Pancreas (tissue), 10 donors: ENCODE measurements at regions of chr22 and their contacts with region 1.

Region 1: DNA sequence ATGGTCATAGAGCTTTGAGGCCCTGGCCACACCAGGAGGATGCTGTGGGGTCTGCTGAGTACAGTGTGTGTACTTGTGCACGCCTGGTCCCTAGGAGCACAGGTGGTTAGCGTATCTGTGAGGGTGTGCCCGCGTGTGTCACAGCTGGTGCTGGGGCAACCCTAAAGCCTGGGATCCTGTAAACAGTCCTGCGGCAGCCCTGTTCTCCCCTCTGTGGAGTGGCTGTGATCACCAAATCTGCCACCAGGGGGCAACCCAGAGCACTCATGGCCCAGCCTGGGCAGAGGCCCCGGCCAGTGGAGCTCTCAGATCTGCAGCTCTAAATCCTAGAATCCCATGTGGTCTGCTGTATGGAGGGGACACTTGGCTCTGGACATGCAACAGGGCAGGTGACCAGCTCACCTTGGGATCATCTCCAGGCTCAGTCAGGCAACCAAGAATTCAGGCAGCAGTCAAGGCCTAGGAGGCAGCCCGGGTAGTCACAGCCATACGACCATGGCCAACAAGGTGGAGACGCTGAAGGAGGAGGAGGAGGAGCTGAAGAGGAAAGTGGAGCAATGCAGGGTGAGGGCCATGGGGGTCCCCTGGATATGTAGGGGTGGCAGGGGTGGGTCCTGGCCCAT is 3.9 kb downstream of the SH3BP1 start:
- DNase-seq: peak; percentile 70 to 98 (median 90)
- ATAC-seq: peak; percentile 72 to 84 (median 82)
- H3K4me3 ChIP-seq: no peak overlapping the region
- H3K27ac ChIP-seq: no peak overlapping the region
- H3K4me1 ChIP-seq: peaks cover 0 to 12% (median 5%) of the 10 kb centered on the region in 3 donors
- H3K27me3 ChIP-seq: no peaks in the 10 kb centered on the region
- CTCF ChIP-seq: peak; percentile 92 to 95 (median 93)

Region 2: GRCh38 chr22:37686002-37686982 is 43.0 kb after region 1 on chr22 and contains the start of gene NOL12:
- intact Hi-C with region 1: loop called in 1 of 3 experiments (anchors 5 kb)
- DNase-seq: peak; percentile 79 to 93 (median 82)
- ATAC-seq: peak; percentile 93 to 96 (median 96)
- H3K4me3 ChIP-seq: peak within 1 kb of the TSS; percentile 70 to 94 (median 85)
- H3K27ac ChIP-seq: peak within 1 kb of the TSS; percentile 24 to 71 (median 65)
- H3K4me1 ChIP-seq: peaks cover 0 to 7% (median 0%) of the 10 kb centered on the region in 3 donors
- H3K27me3 ChIP-seq: no peaks in the 10 kb centered on the region
- CTCF ChIP-seq: no peak
- total RNA-seq, gene NOL12: 6.0 to 12.3 (median 8.5) TPM

Region 3: DNA sequence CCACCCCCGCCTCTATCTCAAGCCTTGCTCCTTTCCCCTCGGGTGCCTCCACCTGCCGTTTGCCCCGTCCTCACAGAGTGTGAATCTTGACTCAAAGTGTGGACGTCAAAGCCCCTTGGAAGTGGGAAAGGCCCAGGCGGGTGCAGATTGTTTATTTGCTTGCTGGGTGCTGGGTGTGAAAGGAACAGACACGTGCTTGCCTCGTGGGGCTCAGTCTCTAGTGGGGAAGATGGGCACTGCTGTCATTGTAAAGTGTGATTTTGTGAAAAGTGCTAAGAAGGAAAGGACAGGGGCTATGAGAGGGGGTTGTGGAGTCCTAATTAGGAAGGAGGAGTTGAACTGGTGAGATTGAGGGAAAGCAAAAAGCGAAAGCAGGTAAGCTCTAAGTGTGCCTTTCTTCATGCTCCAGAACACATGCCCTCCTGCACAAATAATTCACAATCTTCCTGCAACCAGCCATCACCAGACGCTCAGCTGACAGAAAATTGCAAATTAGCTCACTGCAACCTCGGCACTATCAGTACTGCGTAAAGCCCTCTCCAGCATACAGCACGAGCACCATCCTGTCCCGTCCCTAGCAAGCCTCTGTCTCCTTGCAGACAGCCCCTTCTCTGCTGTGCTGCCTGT is 154.7 kb after region 1 on chr22:
- intact Hi-C with region 1: loop called in 1 of 3 experiments (anchors 10 kb)
- DNase-seq: no peak
- ATAC-seq: no peak
- H3K4me3 ChIP-seq: no peak overlapping the region
- H3K27ac ChIP-seq: no peak overlapping the region
- H3K4me1 ChIP-seq: no peaks in the 10 kb centered on the region
- H3K27me3 ChIP-seq: no peaks in the 10 kb centered on the region
- CTCF ChIP-seq: no peak